ENCODE measurements at regions of chr13 and their contacts with region 1.

Region 1: GRCh38 chr13:52652196-52652979 is at the start of gene SUGT1:
- DNase-seq: peak; percentile 82 to 98
- ATAC-seq: peak; percentile 87 to 97 (median 91)
- H3K4me3 ChIP-seq: peak within 1 kb of the TSS; percentile 57
- H3K4me3 Mint-ChIP-seq: no peak within 1 kb of the TSS
- H3K27ac ChIP-seq: peak within 1 kb of the TSS; percentile 88
- H3K27ac Mint-ChIP-seq: no peak within 1 kb of the TSS
- H3K4me1 ChIP-seq: peaks cover 5% of the 10 kb centered on the region
- H3K4me1 Mint-ChIP-seq: peaks cover 8 to 14% of the 10 kb centered on the region in 2 donors
- H3K27me3 ChIP-seq: no peaks in the 10 kb centered on the region
- H3K27me3 Mint-ChIP-seq: no peaks in the 10 kb centered on the region
- CTCF ChIP-seq: peak; percentile 57
- total RNA-seq, gene SUGT1: 27.4 to 34.4 (median 29.7) TPM

Region 2: DNA sequence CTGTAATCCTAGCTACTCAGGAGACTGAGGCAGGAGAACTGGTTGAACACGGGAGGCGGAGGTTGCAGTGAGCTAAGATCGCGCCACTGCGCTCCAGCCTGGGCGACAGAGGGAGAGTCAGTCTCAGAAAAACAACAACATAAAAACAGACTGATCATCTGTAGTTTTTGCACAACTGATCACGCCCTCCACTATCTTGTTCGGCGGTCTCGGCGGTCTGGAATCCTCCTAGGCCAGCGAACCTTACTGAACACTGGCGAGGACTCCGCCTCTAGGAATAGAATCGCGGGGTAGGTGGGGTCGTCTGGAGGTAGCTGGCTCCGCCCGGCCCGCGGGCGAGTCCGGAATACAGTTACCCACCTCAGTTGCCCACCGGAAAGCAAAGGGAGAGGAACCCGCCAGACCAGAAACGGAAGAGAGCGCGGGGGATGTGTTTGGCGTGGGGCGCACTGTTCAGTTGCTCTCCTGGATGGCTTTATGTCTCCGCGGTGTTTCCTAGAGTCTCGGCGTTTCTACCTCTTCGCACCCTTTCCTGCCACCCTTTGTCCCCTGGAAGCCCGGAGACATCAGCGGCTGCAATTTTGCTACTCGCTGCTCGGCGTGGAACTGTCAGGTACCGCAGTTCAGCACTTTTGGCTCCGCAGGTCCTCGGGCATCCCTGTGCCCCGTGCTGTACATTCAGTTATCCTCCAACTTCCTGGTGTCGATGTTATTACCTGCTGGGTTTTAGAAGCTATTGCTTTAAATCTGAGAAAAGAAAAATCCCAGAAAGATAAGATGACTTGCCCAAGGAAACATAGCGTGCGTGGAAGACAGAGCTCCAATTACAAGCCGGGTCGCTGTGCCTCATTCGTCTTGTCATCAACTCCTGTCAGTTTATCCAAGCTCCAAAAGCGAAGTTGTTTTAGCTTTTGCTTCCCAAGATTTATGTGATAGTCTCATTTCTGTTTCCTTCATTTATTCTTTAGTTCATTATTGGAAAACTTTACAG is 35.0 kb before region 1 on chr13:
- intact Hi-C with region 1: loop called (anchors 5 kb)
- DNase-seq: peak; percentile 70 to 90
- ATAC-seq: peak; percentile 90 to 96 (median 96)
- H3K4me3 ChIP-seq: peak overlapping the region; percentile 87
- H3K4me3 Mint-ChIP-seq: peak overlapping the region; percentile 98
- H3K27ac ChIP-seq: peak overlapping the region; percentile 75
- H3K27ac Mint-ChIP-seq: peak overlapping the region; percentile 82 to 89
- H3K4me1 ChIP-seq: peaks cover 12% of the 10 kb centered on the region
- H3K4me1 Mint-ChIP-seq: peaks cover 15 to 20% of the 10 kb centered on the region in 2 donors
- H3K27me3 ChIP-seq: no peaks in the 10 kb centered on the region
- H3K27me3 Mint-ChIP-seq: peaks cover 0 to 5% of the 10 kb centered on the region in 2 donors
- CTCF ChIP-seq: no peak

Region 3: DNA sequence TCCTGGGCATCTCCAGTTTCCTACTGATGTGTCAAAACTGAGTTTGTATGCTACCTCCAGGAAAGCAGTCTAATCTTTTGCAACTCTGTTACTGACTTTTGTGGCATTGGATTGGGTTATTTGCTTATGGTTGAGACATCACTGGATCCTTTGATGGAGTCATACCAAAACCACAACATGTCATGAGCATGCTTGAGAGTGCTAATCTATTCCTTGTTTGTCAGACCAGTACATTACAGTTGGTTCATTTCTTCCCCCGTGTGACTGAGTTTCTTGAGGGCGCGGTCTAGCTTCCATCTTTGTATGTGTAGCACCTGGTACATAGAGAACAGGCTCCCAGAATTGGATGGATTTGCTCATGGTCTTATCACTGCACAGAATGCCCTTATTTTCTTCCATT is 43.5 kb after region 1 on chr13:
- intact Hi-C with region 1: no loop called
- DNase-seq: no peak
- ATAC-seq: no peak
- H3K4me3 ChIP-seq: no peak overlapping the region
- H3K4me3 Mint-ChIP-seq: no peak overlapping the region
- H3K27ac ChIP-seq: no peak overlapping the region
- H3K27ac Mint-ChIP-seq: no peak overlapping the region
- H3K4me1 ChIP-seq: no peaks in the 10 kb centered on the region
- H3K4me1 Mint-ChIP-seq: peaks cover 0 to 5% of the 10 kb centered on the region in 2 donors
- H3K27me3 ChIP-seq: no peaks in the 10 kb centered on the region
- H3K27me3 Mint-ChIP-seq: no peaks in the 10 kb centered on the region
- CTCF ChIP-seq: no peak

Region 4: DNA sequence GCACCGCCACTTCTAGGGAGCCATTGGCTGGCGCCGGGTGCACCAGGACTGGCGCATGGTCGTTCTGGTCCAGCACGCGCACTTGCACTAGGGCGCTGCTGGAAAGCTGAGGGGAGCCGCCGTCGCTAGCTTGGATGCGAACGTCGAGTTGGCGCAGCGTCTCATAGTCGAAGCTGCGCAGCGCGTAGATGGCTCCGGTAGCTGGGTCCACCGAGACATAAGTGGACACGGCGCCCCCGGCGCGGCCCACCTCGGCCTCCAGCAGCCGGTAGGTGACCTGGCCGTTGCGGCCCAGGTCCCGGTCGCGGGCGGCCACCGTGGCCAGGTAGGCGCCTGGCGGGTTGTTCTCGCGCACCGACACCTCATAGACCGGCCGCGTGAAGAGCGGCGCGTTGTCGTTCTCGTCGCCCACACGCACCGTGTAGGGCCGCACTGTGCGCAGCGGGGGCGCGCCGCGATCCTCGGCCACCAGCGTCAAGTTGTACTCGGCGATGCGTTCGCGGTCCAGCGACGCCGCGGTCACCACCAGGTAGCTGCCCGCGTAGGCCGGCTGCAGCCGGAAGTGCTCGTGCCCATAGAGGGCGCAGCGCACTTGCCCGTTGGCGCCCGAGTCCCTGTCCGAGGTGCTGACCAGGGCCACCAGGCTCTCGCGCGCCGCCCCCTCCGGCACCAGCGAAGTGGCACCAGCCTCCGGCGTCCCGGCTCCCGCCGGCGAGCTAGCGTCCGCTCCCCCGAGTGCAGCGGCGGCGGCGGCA is 194.4 kb after region 1 on chr13:
- intact Hi-C with region 1: no loop called
- DNase-seq: peak in 1 of 2 donors; percentile 14
- ATAC-seq: peak; percentile 24 to 76 (median 54)
- H3K4me3 ChIP-seq: no peak overlapping the region
- H3K4me3 Mint-ChIP-seq: no peak overlapping the region
- H3K27ac ChIP-seq: no peak overlapping the region
- H3K27ac Mint-ChIP-seq: no peak overlapping the region
- H3K4me1 ChIP-seq: peaks cover 24% of the 10 kb centered on the region
- H3K4me1 Mint-ChIP-seq: peaks cover 7 to 23% of the 10 kb centered on the region in 2 donors
- H3K27me3 ChIP-seq: peaks cover 65% of the 10 kb centered on the region
- H3K27me3 Mint-ChIP-seq: peaks cover 47 to 56% of the 10 kb centered on the region in 2 donors
- CTCF ChIP-seq: no peak